ENCODE measurements at regions of chrX and their contacts with region 1.

Region 1: GRCh38 chrX:150715184-150715583 is 22.0 kb downstream of the MTMR1 start:
- DNase-seq: no peak
- H3K4me3 Mint-ChIP-seq: no peak overlapping the region
- H3K27ac Mint-ChIP-seq: no peak overlapping the region
- H3K4me1 Mint-ChIP-seq: peaks cover 17% of the 10 kb centered on the region
- H3K27me3 Mint-ChIP-seq: no peaks in the 10 kb centered on the region

Region 2: DNA sequence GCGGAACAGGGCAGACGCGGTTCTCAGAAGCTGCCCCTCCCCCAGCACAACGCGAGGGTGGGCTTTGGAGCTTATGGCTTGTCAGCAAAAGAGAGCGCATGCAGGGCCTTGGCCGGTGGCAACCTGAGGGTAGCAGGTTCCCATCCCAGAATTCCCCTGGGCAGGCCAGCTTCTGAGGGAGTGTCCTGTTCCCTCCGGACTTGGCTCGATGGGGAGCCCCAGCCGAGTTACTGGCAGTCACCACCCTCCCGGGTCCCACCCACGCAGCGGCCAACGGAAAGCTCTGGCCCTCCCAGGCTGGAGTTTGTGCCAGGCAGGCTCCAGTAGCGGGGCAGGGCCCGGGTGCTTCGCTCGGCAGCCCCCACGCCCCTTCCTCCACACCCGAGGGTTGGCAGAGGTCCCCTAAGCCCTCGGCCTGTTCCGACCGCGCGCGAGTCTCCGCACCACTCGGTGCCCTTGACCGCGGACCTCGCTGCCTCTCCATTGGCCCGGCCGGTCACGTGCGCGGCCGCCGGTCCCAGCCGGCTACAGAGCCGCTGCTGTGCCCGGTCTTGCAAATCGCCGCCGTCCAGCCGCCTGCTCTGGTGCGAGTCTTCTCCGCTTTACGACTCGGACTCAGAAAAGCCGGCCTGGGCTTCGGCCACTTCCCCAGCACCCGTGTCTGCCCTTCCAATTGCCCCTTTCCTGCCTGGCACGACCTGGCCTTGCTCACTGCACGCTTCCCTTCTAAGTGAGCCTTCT is 167.6 kb before region 1 on chrX:
- intact Hi-C with region 1: no loop called
- DNase-seq: peak; percentile 59
- H3K4me3 Mint-ChIP-seq: peak overlapping the region; percentile 55
- H3K27ac Mint-ChIP-seq: peak overlapping the region; percentile 77
- H3K4me1 Mint-ChIP-seq: peaks cover 20% of the 10 kb centered on the region
- H3K27me3 Mint-ChIP-seq: no peaks in the 10 kb centered on the region

Region 3: GRCh38 chrX:150635952-150636351 is 79.2 kb before region 1 on chrX:
- intact Hi-C with region 1: loop called (anchors 5 kb)
- DNase-seq: no peak
- H3K4me3 Mint-ChIP-seq: no peak overlapping the region
- H3K27ac Mint-ChIP-seq: peak overlapping the region; percentile 78
- H3K4me1 Mint-ChIP-seq: peaks cover 4% of the 10 kb centered on the region
- H3K27me3 Mint-ChIP-seq: no peaks in the 10 kb centered on the region

Region 4: GRCh38 chrX:150683536-150684146 is 31.5 kb before region 1 on chrX:
- intact Hi-C with region 1: loop called (anchors 1 kb)
- DNase-seq: peak; percentile 75
- H3K4me3 Mint-ChIP-seq: no peak overlapping the region
- H3K27ac Mint-ChIP-seq: no peak overlapping the region
- H3K4me1 Mint-ChIP-seq: peaks cover 8% of the 10 kb centered on the region
- H3K27me3 Mint-ChIP-seq: no peaks in the 10 kb centered on the region

Region 5: DNA sequence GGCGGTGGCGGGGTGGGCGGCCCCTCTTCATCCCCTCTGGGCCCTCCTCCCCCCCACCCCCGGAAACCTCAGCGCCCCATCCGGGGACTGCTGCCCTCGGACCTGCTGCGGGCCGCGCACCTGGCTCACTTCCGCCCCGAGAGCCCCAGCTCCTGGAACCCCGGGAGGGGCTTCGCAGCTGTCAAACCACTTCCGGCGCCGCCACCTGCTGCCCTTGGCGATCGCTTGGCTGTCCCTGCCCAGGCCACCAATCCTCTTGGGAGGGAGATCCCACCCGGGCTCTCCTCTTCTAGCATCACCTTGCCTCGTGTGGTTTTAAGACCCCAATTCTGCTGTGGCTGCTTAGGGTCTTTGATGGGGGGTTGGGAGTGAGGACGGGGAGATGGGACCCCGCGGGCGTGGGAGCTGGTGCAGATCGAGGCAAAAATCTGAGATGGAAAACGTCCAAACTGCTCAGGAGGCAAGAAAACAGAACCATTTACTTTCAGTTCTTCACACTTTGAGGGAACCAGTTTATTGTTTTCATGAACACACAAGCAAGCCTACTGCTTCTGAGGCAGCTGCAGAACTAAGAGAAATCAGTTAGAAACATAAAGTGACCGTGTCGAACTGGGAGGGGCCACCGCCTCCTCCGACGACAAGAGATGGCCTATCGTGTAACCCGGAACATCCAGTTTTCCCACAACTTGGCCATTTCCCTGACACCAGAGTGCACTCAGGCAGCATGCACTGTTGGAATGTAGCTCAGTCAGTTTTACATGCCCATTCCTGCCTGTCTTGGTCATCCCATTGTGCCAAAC is 21.2 kb before region 1 on chrX:
- intact Hi-C with region 1: loop called (anchors 2 kb)
- DNase-seq: peak; percentile 91
- H3K4me3 Mint-ChIP-seq: peak overlapping the region; percentile 89
- H3K27ac Mint-ChIP-seq: peak overlapping the region; percentile 97
- H3K4me1 Mint-ChIP-seq: peaks cover 58% of the 10 kb centered on the region
- H3K27me3 Mint-ChIP-seq: no peaks in the 10 kb centered on the region

Region 6: DNA sequence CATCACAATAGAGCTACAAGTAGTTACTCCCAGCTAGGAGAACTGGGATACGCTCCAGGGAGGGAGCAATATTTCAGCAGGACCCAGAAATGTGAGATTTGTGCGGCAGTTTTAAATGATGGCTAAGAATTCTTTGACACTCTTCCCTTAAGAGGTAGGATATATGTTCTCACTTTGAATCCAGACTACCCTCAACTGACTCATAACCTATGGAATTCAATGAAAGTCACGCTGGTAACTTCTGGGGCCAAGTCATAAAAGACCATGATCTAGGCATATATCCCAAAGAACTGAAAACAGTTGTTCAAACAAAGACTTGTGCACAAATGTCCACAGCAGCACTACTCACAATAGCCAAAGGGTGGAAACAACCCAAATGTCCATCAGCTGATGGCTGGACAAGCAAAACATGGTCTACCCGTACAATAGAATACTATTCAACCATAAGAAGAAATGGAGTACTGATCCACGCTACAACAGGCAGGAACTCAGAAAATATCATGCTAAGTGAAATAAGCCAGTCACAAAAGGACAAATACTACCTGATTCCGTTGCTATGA is 172.8 kb after region 1 on chrX:
- intact Hi-C with region 1: no loop called
- DNase-seq: no peak
- H3K4me3 Mint-ChIP-seq: no peak overlapping the region
- H3K27ac Mint-ChIP-seq: no peak overlapping the region
- H3K4me1 Mint-ChIP-seq: no peaks in the 10 kb centered on the region
- H3K27me3 Mint-ChIP-seq: no peaks in the 10 kb centered on the region

Measured in activated CD4-positive, alpha-beta T cell treated with anti-CD3 and anti-CD28 coated beads, Interleukin-2, amount 10 ng/mL, durations not matched to agents 24 days and 14 days (primary cell).